Esophagus squamous epithelium (tissue), 5 donors: ENCODE measurements at regions of chr6 and their contacts with region 1.

Region 1: GRCh38 chr6:157274471-157275226 is 48.7 kb downstream of the TMEM242 start:
- DNase-seq: peak; percentile 21
- H3K4me3 ChIP-seq: peak overlapping the region; percentile 53 to 69 (median 65)
- H3K27ac ChIP-seq: peak overlapping the region; percentile 79 to 90 (median 86)
- H3K4me1 ChIP-seq: peaks cover 0 to 30% (median 9%) of the 10 kb centered on the region in 3 donors
- H3K27me3 ChIP-seq: no peaks in the 10 kb centered on the region
- CTCF ChIP-seq: peak; percentile 49 to 98 (median 96)
- POLR2A ChIP-seq: peak in 2 of 4 donors; percentile 26 to 56

Region 2: DNA sequence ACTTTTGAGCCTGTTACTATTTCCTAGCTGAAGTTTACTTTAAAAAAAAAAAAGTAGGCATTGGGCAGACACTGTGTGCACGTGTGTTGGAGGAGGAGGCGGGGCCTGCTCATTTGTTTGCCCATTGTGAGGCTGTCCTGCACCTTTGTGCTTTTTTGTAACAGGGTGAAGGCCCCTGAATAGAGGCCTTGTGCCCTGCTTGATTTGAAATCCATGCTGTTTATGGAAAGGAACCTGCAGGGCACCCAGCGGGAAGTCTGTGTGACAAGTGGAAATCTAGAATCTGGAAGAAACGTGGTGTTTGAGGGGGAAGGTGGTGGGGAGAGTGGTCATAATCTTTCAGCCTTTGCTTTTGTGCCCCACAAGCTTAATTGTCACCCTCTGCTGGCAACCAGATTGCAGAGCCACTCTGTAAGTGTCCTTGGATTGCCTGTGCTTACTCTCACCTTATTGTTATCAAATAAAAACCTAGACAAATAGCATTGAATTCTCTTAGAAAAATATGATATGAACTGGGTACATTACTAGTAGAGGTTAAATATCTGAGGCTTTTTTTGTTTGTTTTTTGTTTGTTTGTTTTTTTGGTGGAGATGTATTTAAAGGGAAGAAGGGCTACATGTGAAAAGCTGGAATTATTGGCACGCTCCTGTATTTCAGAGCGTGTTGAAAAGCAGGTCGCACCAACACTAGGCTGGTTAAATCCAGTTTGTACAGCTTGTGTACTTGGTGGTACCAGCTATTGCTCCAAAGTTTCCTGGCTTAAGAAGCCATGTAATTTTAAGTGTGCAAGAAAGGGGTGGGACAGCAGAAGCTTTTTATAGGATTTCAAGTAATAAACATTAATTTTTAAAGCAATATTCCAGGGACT is 341.2 kb before region 1 on chr6:
- intact Hi-C with region 1: no loop called
- DNase-seq: no peak
- H3K4me3 ChIP-seq: no peak overlapping the region
- H3K27ac ChIP-seq: peak overlapping the region in 3 of 4 donors; percentile 39 to 70 (median 56)
- H3K4me1 ChIP-seq: peaks cover 0 to 43% (median 17%) of the 10 kb centered on the region in 3 donors
- H3K27me3 ChIP-seq: no peaks in the 10 kb centered on the region
- CTCF ChIP-seq: no peak
- POLR2A ChIP-seq: no peak

Region 3: DNA sequence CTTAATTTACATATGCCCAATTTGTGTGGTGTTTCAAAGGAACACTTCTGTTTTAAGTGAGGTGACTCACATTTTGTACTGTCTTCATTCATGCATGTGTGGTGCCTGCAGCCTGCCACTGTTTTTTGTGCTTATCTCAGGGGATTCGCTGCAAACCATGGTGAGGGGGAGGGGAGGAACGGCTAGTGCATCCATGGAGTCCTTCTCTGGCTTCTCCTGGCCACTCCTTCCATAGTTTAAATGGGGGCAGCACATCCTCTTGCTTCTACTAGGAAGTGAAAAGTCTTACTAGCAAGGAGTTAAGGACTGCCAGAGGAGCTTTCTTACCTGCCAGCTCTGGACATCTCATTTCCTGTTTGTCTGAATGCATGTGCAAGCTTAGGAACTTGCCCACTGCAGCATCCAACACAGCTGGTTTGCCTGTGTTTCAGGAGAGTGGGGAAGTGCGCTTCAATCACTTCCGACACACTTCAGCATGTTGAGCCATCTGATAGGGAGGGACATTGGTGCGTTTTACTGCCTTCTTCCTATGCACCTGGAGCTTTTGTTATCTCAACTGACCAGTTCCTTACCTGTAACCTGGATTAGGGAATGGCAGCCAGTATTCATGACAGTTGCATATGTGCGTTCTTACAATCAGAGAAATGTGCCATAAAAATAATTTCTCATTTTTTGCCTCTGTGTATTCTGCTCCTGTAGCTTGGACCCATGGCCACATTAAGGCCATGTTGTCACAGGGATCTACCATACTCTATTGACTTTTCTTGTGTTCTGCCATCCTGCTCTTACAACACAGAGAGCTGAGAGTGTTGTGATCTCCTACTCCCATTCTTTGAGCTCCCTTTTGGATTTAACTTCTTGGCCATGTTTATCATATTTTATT is 286.1 kb before region 1 on chr6:
- intact Hi-C with region 1: no loop called
- DNase-seq: no peak
- H3K4me3 ChIP-seq: no peak overlapping the region
- H3K27ac ChIP-seq: no peak overlapping the region
- H3K4me1 ChIP-seq: peaks cover 4 to 43% (median 11%) of the 10 kb centered on the region in 3 donors
- H3K27me3 ChIP-seq: no peaks in the 10 kb centered on the region
- CTCF ChIP-seq: no peak
- POLR2A ChIP-seq: no peak

Region 4: DNA sequence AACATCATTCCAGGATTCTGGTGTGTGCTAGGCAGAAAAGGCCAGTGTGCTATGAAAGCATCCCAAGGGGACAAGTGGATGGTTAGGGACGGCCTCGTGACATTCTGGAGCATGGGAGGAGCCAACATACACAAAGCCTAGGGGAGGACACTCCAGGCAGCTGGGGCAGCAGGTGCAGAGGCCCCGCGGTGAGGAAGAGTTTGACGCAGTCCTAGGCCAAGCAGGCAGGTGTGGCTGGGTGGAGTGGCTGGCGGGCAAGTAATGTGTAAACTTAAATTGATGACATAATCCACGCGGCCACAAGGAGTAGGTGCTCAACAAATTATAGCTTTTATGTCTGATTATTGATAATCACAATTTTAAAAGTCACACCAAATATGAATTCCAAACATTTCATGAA is 44.9 kb before region 1 on chr6:
- intact Hi-C with region 1: loop called (anchors 5 kb)
- DNase-seq: no peak
- H3K4me3 ChIP-seq: no peak overlapping the region
- H3K27ac ChIP-seq: no peak overlapping the region
- H3K4me1 ChIP-seq: peaks cover 0 to 31% (median 14%) of the 10 kb centered on the region in 3 donors
- H3K27me3 ChIP-seq: peaks cover 0 to 19% (median 0%) of the 10 kb centered on the region in 4 donors
- CTCF ChIP-seq: no peak
- POLR2A ChIP-seq: no peak